PC-3 (cell line): ENCODE measurements at regions of chr14 and their contacts with region 1.

Region 1: GRCh38 chr14:34331728-34332623 is 130.1 kb downstream of the SPTSSA start:
- DNase-seq: peak; percentile 85
- ATAC-seq: peak; percentile 88
- H3K4me3 ChIP-seq: peak overlapping the region; percentile 20; the same call in 1 of the 2 replicates
- H3K27ac ChIP-seq: peak overlapping the region; percentile 66
- H3K4me1 ChIP-seq: peaks cover 21% of the 10 kb centered on the region
- H3K27me3 ChIP-seq: no peaks in the 10 kb centered on the region
- CTCF ChIP-seq: peak; percentile 94

Region 2: DNA sequence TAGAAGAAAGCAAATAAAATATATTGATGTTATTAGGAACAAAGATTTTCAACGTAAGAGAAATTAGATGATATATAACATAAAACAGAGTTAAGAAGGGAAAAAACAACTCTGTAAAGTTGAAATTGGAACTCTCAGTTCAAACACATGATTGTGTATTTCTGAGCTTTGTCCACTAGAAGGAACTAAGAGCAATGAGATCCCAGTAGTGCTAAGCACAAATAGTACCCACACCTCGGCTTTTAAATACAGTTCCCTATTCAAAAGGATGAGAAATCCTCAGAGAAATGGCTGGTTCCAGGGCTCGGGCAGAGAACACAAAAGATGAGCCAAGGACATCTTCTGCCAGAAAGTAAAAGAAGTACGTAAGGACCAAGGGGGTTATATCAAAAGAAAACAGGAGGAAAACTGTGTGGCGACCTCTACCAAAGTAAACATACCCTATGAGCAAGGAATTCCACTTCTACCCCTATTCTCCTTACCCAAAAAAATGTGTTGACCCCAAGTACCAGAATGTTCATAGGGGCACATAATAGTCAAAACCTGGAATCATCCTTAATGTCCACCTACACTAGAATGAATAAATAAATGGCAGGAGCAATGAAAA is 33.4 kb after region 1 on chr14:
- CTCF ChIA-PET with region 1: interaction called, 12 read pairs
- POLR2A ChIA-PET with region 1: interaction called, 9 read pairs
- intact Hi-C with region 1: loop called (anchors 2 kb)
- DNase-seq: peak; percentile 29
- ATAC-seq: no peak
- H3K4me3 ChIP-seq: no peak overlapping the region
- H3K27ac ChIP-seq: peak overlapping the region; percentile 96
- H3K4me1 ChIP-seq: peaks cover 65% of the 10 kb centered on the region
- H3K27me3 ChIP-seq: no peaks in the 10 kb centered on the region
- CTCF ChIP-seq: peak; percentile 52